Panc1 (cell line): ENCODE measurements at regions of chr4 and their contacts with region 1.

Region 1: DNA sequence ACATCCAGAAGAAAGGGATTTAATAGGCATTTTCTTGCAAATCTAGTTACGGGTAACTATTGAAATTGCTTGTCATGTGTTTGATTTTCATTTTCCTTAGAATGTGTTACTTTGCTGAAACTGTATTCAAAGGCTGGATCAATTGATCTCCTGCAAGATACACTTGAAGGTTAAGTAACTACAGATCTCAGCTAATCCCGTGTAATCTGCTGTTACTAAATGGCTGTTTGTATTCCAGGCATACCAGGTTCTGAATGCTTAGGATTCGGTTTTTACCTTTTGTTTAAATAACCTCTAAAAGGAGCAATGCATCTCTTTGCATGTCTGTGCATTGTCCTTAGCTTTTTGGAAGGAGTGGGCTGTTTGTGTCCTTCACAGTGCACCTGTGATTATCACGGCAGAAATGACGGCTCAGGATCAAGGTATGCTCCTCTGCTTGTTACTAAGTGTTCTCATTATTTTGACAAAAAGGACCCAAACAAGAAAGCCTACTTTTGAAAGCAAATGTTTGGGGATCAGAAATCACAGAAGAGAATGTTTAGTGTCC is at the start of gene LRIT3:
- DNase-seq: no peak
- ATAC-seq: no peak
- H3K4me3 ChIP-seq: no peak within 1 kb of the TSS
- H3K27ac ChIP-seq: no peak within 1 kb of the TSS
- H3K4me1 ChIP-seq: no peaks in the 10 kb centered on the region
- H3K27me3 ChIP-seq: peaks cover 2% of the 10 kb centered on the region; the same call in 1 of the 2 replicates
- CTCF ChIP-seq: no peak
- total RNA-seq, gene LRIT3: 0.05 TPM

Region 2: DNA sequence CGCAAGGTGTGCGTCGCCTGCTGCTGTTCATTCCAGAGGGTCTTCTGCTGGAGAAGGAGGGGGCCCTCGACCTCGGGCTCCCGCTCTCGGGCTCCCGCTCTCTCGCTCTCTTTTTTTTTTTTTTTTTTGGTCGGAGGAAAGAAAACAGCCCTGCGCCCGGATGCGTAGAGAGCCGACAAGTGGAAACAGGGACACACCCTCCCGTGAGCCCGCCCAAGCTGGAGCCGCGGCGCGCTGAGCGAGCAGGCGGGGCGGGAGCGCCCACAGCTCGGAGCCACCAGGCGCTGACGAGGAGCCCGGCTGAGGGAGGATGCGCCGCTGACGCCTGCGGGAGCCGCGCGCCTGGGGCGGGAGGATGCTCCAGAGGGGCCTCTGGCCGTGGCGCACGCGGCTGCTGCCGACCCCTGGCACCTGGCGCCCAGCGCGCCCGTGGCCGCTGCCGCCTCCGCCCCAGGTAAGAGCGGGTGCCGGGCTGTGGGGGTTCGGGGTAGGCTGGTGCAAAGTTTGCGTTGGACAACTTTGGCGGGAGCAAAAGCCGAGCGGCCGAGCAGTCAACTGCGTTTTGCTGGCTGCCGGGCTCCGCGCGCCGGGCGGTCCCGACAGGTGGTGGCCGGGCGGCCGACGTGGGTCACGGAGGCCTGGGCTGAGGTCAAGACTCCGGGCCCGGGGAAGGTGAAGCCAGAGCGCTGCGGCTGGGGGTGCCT is 287.8 kb before region 1 on chr4 and contains the start of gene MCUB:
- CTCF ChIA-PET with region 1: no interaction called
- POLR2A ChIA-PET with region 1: no interaction called
- in situ Hi-C with region 1: no loop called
- intact Hi-C with region 1: no loop called
- DNase-seq: peak; percentile 39
- ATAC-seq: peak; percentile 100
- H3K4me3 ChIP-seq: peak within 1 kb of the TSS; percentile 64 to 69
- H3K27ac ChIP-seq: peak within 1 kb of the TSS; percentile 72
- H3K4me1 ChIP-seq: no peaks in the 10 kb centered on the region; the same call in 1 of the 2 replicates
- H3K27me3 ChIP-seq: no peaks in the 10 kb centered on the region
- CTCF ChIP-seq: no peak
- total RNA-seq, gene MCUB: 24.1 TPM

Region 3: DNA sequence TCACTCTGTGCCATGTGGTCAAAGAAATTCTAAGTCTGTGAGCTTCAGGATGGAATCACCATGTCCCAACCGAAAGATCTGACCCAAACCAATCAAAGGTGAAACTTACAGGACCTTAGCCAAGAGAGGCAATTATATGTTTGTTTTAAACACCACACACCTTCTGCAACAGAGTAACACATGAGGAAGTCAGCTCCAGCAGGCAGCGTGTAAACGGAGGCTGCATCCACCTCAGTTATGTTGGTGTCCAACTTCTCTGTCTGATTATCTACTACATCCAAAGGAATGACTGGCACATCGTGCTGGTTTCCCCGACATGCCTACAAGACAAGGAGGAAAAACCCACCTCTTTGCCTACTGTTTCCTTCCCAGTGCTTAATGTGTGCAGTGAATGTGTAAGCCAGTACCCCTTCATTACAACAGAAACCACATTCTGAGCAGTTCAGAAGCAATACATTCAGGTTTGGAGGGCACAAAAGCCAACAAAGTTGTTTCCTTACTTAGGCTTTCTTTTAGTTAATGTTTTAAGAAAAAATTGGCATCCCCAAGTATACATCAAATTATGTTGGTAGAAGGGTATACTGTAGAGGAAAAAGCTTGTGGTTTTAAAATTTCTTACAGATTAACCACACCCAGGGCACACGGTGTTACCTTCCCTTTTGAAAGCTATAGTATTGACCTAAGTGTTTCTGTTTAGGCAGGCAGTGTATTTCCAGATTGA is 157.1 kb before region 1 on chr4:
- CTCF ChIA-PET with region 1: no interaction called
- POLR2A ChIA-PET with region 1: interaction called, 11 read pairs
- in situ Hi-C with region 1: no loop called
- intact Hi-C with region 1: no loop called
- DNase-seq: no peak
- ATAC-seq: no peak
- H3K4me3 ChIP-seq: no peak overlapping the region
- H3K27ac ChIP-seq: no peak overlapping the region
- H3K4me1 ChIP-seq: no peaks in the 10 kb centered on the region
- H3K27me3 ChIP-seq: no peaks in the 10 kb centered on the region
- CTCF ChIP-seq: no peak

Region 4: GRCh38 chr4:109864134-109864533 is 16.2 kb after region 1 on chr4:
- CTCF ChIA-PET with region 1: no interaction called
- POLR2A ChIA-PET with region 1: no interaction called
- in situ Hi-C with region 1: no loop called
- intact Hi-C with region 1: no loop called
- DNase-seq: no peak
- ATAC-seq: no peak
- H3K4me3 ChIP-seq: no peak overlapping the region
- H3K27ac ChIP-seq: no peak overlapping the region
- H3K4me1 ChIP-seq: no peaks in the 10 kb centered on the region
- H3K27me3 ChIP-seq: no peaks in the 10 kb centered on the region
- CTCF ChIP-seq: no peak